CD4-positive, alpha-beta T cell (primary cell): ENCODE measurements at regions of chr3 and their contacts with region 1.

Region 1: DNA sequence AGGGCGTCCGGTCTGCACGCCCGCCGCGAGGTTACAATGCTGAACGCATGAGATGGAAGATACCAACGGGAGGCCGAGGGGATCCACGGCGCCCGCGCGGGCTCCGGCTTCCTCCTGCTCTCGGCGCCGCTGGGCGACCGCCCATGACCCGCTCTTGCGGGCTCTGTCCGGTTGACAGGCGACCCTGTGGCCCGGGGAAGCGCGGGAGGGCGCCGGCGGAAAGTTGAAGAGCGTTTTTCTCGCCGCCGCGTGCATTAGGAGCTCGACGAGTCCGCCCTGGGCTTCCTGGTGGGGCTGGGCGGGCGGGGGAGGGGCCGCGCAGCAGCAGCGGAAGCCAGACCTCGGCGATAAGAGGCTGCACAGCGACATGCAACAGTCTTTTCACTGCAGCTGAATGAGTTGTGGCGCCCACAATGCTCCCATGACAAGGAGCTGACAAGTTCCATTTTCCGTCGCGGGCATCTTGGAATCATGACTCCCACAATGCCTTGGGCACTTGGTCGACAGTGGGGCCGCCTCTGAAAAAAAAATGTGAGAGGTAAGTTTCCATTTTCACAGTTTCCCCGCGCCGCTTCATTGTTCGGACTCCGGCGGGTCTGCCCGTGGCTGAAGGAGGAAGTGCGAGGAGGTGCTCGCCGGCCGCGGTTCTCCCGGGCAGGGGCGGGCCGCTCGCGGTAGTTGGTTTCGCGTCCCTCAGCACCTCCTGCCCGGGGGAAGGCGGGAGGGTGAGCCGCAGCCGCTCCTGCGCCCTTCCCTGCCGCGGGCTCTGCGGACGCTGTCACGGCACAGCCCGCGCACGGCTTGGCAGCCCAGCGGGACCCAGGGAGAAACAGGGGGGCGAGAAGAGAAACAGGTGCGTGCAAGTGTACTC is at the start of gene MBNL1:
- DNase-seq: peak; percentile 75 to 95 (median 82)
- ATAC-seq: peak; percentile 58
- H3K4me3 ChIP-seq: peak within 1 kb of the TSS; percentile 90
- H3K4me3 Mint-ChIP-seq: peak within 1 kb of the TSS; percentile 94
- H3K27ac ChIP-seq: peak within 1 kb of the TSS; percentile 90 to 100
- H3K27ac Mint-ChIP-seq: peak within 1 kb of the TSS; percentile 99
- H3K4me1 ChIP-seq: peaks cover 26% of the 10 kb centered on the region
- H3K4me1 Mint-ChIP-seq: peaks cover 67% of the 10 kb centered on the region
- H3K27me3 ChIP-seq: no peaks in the 10 kb centered on the region
- H3K27me3 Mint-ChIP-seq: no peaks in the 10 kb centered on the region
- CTCF ChIP-seq: no peak
- total RNA-seq, gene MBNL1: 551 to 561 TPM

Region 2: GRCh38 chr3:152205097-152205593 is 63.6 kb before region 1 on chr3:
- CTCF ChIA-PET with region 1: interaction called, 3 read pairs
- POLR2A ChIA-PET with region 1: interaction called, 185 read pairs
- intact Hi-C with region 1: no loop called
- DNase-seq: peak in 4 of 14 experiments; percentile 18 to 71 (median 66)
- ATAC-seq: peak; percentile 45
- H3K4me3 ChIP-seq: peak overlapping the region; percentile 47
- H3K4me3 Mint-ChIP-seq: peak overlapping the region; percentile 93
- H3K27ac ChIP-seq: peak overlapping the region; percentile 58 to 66
- H3K27ac Mint-ChIP-seq: peak overlapping the region; percentile 96
- H3K4me1 ChIP-seq: peaks cover 28% of the 10 kb centered on the region
- H3K4me1 Mint-ChIP-seq: peaks cover 87% of the 10 kb centered on the region
- H3K27me3 ChIP-seq: no peaks in the 10 kb centered on the region
- H3K27me3 Mint-ChIP-seq: no peaks in the 10 kb centered on the region
- CTCF ChIP-seq: no peak

Region 3: DNA sequence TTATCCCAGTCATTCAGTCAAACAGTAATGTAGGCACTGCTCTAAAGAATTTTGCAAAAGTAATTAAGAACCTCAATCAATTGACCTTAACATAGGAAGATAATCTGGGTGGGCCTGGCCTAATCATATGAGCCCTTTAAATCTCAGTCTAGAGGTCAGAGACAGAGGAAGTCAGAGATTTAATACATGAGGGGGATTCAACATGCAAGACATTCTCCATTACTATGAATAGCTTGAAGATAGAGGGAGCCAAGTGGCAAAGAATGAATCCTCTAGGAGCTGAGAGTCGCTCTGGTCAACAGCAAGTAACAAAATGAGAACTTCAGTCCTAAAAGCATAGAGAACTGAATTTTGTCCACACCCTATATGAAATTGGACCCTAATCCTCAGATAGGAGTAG is 39.1 kb before region 1 on chr3:
- CTCF ChIA-PET with region 1: interaction called, 3 read pairs
- POLR2A ChIA-PET with region 1: interaction called, 23 read pairs
- intact Hi-C with region 1: loop called in 1 of 2 experiments (anchors 5 kb)
- DNase-seq: no peak
- ATAC-seq: no peak
- H3K4me3 ChIP-seq: no peak overlapping the region
- H3K4me3 Mint-ChIP-seq: no peak overlapping the region
- H3K27ac ChIP-seq: no peak overlapping the region
- H3K27ac Mint-ChIP-seq: no peak overlapping the region
- H3K4me1 ChIP-seq: no peaks in the 10 kb centered on the region
- H3K4me1 Mint-ChIP-seq: peaks cover 72% of the 10 kb centered on the region
- H3K27me3 ChIP-seq: no peaks in the 10 kb centered on the region
- H3K27me3 Mint-ChIP-seq: no peaks in the 10 kb centered on the region
- CTCF ChIP-seq: no peak

Region 4: DNA sequence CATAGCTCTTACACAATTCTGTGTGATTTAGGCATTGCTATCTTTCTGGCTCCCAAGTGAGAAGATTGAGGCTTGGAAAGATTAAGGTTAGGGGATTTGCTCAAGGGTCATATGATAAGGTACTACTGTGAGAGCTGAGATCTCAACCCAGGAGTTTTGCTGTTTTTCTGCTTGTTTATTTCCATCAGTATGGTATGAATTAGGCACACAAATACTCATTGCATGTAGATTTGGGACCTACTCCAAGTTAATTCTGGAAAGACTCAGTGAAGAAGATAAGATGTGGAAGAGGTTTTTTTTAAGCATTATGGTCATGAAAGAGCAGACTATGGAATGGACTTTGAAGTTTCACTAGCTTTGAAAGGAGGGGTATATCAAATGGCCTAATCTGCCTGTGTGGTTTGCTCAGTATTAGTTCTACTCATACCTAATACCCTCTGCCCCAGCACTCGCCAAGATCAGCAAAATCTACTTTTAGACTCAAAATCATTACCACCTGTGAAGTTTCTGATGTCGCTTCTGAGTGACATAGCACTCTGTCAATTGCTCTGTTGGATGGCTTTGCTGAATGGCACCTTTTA is 12.4 kb after region 1 on chr3:
- CTCF ChIA-PET with region 1: interaction called, 5 read pairs
- POLR2A ChIA-PET with region 1: interaction called, 116 read pairs
- intact Hi-C with region 1: loop called in 1 of 2 experiments (anchors 2 kb)
- DNase-seq: no peak
- ATAC-seq: no peak
- H3K4me3 ChIP-seq: peak overlapping the region; percentile 34
- H3K4me3 Mint-ChIP-seq: peak overlapping the region; percentile 79
- H3K27ac ChIP-seq: peak overlapping the region; percentile 2 to 53
- H3K27ac Mint-ChIP-seq: peak overlapping the region; percentile 82
- H3K4me1 ChIP-seq: peaks cover 31% of the 10 kb centered on the region
- H3K4me1 Mint-ChIP-seq: peaks cover 86% of the 10 kb centered on the region
- H3K27me3 ChIP-seq: no peaks in the 10 kb centered on the region
- H3K27me3 Mint-ChIP-seq: no peaks in the 10 kb centered on the region
- CTCF ChIP-seq: no peak

Region 5: DNA sequence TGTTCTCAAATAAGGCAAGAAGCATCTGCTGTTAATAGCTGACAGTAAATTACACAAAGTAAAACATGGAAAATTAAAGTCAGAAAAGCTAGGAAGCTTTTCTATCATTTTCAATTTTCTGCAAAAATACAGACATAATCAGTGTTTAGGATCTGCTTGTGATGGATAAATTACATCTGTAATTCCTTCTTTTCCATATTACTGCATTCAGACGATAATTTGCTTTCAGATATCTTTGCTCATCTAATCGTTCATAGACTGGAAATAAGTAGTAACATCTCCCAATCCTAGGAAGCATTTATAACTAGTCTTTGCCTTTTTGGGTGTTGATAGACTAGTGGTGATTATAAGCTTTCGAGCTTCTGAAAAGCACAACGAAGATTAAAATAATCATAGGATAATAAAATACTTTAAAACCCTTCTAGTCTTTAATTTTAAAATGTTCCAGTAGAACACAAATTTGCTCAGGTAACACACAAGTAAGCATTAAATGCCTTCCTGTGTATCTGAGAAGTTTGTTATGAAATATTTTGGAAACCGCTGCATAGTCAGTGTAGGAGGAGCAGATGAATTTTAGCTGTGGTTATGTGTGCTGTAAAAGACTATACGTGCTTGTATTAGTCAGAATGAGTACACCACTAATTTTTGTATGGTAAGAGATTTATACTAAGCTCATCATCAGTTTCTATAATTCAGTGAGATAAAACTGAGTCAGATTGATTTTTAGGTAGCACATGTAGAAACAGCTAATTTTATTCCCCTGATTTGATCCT is 40.9 kb after region 1 on chr3:
- CTCF ChIA-PET with region 1: no interaction called
- POLR2A ChIA-PET with region 1: interaction called, 17 read pairs
- intact Hi-C with region 1: loop called in 1 of 2 experiments (anchors 5 kb)
- DNase-seq: peak in 3 of 14 experiments; percentile 48 to 60 (median 52)
- ATAC-seq: peak; percentile 85
- H3K4me3 ChIP-seq: no peak overlapping the region
- H3K4me3 Mint-ChIP-seq: peak overlapping the region; percentile 54
- H3K27ac ChIP-seq: peak overlapping the region; percentile 16 to 17
- H3K27ac Mint-ChIP-seq: peak overlapping the region; percentile 78
- H3K4me1 ChIP-seq: peaks cover 38% of the 10 kb centered on the region
- H3K4me1 Mint-ChIP-seq: peaks cover 87% of the 10 kb centered on the region
- H3K27me3 ChIP-seq: no peaks in the 10 kb centered on the region
- H3K27me3 Mint-ChIP-seq: no peaks in the 10 kb centered on the region
- CTCF ChIP-seq: no peak

Region 6: GRCh38 chr3:152444029-152444641 is 175.3 kb after region 1 on chr3:
- CTCF ChIA-PET with region 1: interaction called, 6 read pairs
- POLR2A ChIA-PET with region 1: interaction called, 13 read pairs
- intact Hi-C with region 1: no loop called
- DNase-seq: peak in 3 of 14 experiments; percentile 62 to 68 (median 66)
- ATAC-seq: peak; percentile 57
- H3K4me3 ChIP-seq: no peak overlapping the region
- H3K4me3 Mint-ChIP-seq: peak overlapping the region; percentile 12
- H3K27ac ChIP-seq: peak overlapping the region in 1 of 2 donors; percentile 41
- H3K27ac Mint-ChIP-seq: peak overlapping the region; percentile 73
- H3K4me1 ChIP-seq: peaks cover 13% of the 10 kb centered on the region
- H3K4me1 Mint-ChIP-seq: peaks cover 79% of the 10 kb centered on the region
- H3K27me3 ChIP-seq: no peaks in the 10 kb centered on the region
- H3K27me3 Mint-ChIP-seq: no peaks in the 10 kb centered on the region
- CTCF ChIP-seq: peak; percentile 70

Region 7: GRCh38 chr3:152695840-152696239 is 427.1 kb after region 1 on chr3:
- CTCF ChIA-PET with region 1: no interaction called
- POLR2A ChIA-PET with region 1: no interaction called
- intact Hi-C with region 1: no loop called
- DNase-seq: no peak
- ATAC-seq: no peak
- H3K4me3 ChIP-seq: no peak overlapping the region
- H3K4me3 Mint-ChIP-seq: no peak overlapping the region
- H3K27ac ChIP-seq: no peak overlapping the region
- H3K27ac Mint-ChIP-seq: no peak overlapping the region
- H3K4me1 ChIP-seq: no peaks in the 10 kb centered on the region
- H3K4me1 Mint-ChIP-seq: no peaks in the 10 kb centered on the region
- H3K27me3 ChIP-seq: no peaks in the 10 kb centered on the region
- H3K27me3 Mint-ChIP-seq: no peaks in the 10 kb centered on the region
- CTCF ChIP-seq: no peak

Region 8: GRCh38 chr3:152885076-152885475 is 616.3 kb after region 1 on chr3:
- CTCF ChIA-PET with region 1: no interaction called
- POLR2A ChIA-PET with region 1: no interaction called
- intact Hi-C with region 1: no loop called
- DNase-seq: peak in 1 of 14 experiments; percentile 5
- ATAC-seq: no peak
- H3K4me3 ChIP-seq: no peak overlapping the region
- H3K4me3 Mint-ChIP-seq: no peak overlapping the region
- H3K27ac ChIP-seq: no peak overlapping the region
- H3K27ac Mint-ChIP-seq: no peak overlapping the region
- H3K4me1 ChIP-seq: no peaks in the 10 kb centered on the region
- H3K4me1 Mint-ChIP-seq: no peaks in the 10 kb centered on the region
- H3K27me3 ChIP-seq: no peaks in the 10 kb centered on the region
- H3K27me3 Mint-ChIP-seq: no peaks in the 10 kb centered on the region
- CTCF ChIP-seq: no peak